Caco-2 (cell line): ENCODE measurements at regions of chr1 and their contacts with region 1.

Region 1: GRCh38 chr1:222233444-222234158 is 314.3 kb downstream of the HHIPL2 start:
- DNase-seq: no peak
- H3K4me3 ChIP-seq: no peak overlapping the region
- H3K4me3 Mint-ChIP-seq: no peak overlapping the region
- H3K27ac Mint-ChIP-seq: no peak overlapping the region
- H3K4me1 ChIP-seq: no peaks in the 10 kb centered on the region
- H3K4me1 Mint-ChIP-seq: no peaks in the 10 kb centered on the region
- H3K27me3 ChIP-seq: no peaks in the 10 kb centered on the region
- H3K27me3 Mint-ChIP-seq: peaks cover 4% of the 10 kb centered on the region
- CTCF ChIP-seq: no peak

Region 2: GRCh38 chr1:222243902-222244301 is 10.3 kb after region 1 on chr1:
- CTCF ChIA-PET with region 1: no interaction called
- POLR2A ChIA-PET with region 1: no interaction called
- intact Hi-C with region 1: no loop called
- DNase-seq: no peak
- H3K4me3 ChIP-seq: no peak overlapping the region
- H3K4me3 Mint-ChIP-seq: no peak overlapping the region
- H3K27ac Mint-ChIP-seq: no peak overlapping the region
- H3K4me1 ChIP-seq: no peaks in the 10 kb centered on the region
- H3K4me1 Mint-ChIP-seq: no peaks in the 10 kb centered on the region
- H3K27me3 ChIP-seq: no peaks in the 10 kb centered on the region
- H3K27me3 Mint-ChIP-seq: peaks cover 2% of the 10 kb centered on the region
- CTCF ChIP-seq: no peak

Region 3: DNA sequence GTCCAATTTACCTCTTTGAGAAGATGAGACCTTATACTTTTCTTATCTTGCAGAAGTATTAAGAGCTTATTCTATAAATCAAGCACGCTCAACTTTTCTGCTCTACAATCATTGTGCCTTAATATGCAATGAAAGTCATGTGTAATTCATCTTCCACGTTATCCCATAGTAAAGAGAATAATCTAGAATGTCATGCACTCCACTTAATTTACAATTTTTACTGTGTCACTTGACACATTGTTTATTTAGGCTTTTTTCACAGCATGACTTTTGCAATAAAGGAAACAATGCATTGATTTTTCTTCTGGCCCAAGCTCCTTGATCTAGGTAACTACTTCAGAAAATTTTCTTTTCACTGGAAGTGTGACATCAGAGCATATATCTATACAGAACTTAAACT is 23.4 kb after region 1 on chr1:
- CTCF ChIA-PET with region 1: no interaction called
- POLR2A ChIA-PET with region 1: no interaction called
- intact Hi-C with region 1: loop called (anchors 2 kb)
- DNase-seq: no peak
- H3K4me3 ChIP-seq: no peak overlapping the region
- H3K4me3 Mint-ChIP-seq: no peak overlapping the region
- H3K27ac Mint-ChIP-seq: no peak overlapping the region
- H3K4me1 ChIP-seq: peaks cover 4% of the 10 kb centered on the region; the same call in 1 of the 2 replicates
- H3K4me1 Mint-ChIP-seq: no peaks in the 10 kb centered on the region
- H3K27me3 ChIP-seq: no peaks in the 10 kb centered on the region
- H3K27me3 Mint-ChIP-seq: peaks cover 3% of the 10 kb centered on the region
- CTCF ChIP-seq: no peak